Uterus (tissue), 4 donors: ENCODE measurements at regions of chr1 and their contacts with region 1.

Region 1: DNA sequence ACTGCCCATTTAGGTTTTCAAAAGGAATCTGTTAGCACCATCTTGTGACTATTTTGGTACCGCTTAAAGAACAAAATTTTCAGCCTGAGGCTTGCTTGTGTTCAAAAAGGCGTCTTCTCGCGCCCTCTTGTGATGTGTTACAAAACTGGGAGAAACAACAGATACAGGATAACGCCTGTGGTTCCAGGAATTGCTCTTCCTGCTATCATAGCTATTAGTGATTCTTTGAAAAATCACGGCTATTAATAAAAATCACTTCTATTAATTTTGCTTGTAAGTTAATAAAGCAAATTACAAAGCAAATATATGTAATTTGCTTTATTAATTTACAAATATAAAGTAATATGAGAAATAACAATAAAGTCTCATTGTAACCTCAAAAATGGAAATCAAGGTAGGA is 82.2 kb upstream of the ABCD3 start:
- DNase-seq: peak; percentile 66 to 81
- H3K4me3 ChIP-seq: no peak overlapping the region
- H3K27ac ChIP-seq: no peak overlapping the region
- H3K4me1 ChIP-seq: no peaks in the 10 kb centered on the region
- H3K27me3 ChIP-seq: no peaks in the 10 kb centered on the region
- CTCF ChIP-seq: peak; percentile 85 to 99 (median 92)
- POLR2A ChIP-seq: no peak

Region 2: DNA sequence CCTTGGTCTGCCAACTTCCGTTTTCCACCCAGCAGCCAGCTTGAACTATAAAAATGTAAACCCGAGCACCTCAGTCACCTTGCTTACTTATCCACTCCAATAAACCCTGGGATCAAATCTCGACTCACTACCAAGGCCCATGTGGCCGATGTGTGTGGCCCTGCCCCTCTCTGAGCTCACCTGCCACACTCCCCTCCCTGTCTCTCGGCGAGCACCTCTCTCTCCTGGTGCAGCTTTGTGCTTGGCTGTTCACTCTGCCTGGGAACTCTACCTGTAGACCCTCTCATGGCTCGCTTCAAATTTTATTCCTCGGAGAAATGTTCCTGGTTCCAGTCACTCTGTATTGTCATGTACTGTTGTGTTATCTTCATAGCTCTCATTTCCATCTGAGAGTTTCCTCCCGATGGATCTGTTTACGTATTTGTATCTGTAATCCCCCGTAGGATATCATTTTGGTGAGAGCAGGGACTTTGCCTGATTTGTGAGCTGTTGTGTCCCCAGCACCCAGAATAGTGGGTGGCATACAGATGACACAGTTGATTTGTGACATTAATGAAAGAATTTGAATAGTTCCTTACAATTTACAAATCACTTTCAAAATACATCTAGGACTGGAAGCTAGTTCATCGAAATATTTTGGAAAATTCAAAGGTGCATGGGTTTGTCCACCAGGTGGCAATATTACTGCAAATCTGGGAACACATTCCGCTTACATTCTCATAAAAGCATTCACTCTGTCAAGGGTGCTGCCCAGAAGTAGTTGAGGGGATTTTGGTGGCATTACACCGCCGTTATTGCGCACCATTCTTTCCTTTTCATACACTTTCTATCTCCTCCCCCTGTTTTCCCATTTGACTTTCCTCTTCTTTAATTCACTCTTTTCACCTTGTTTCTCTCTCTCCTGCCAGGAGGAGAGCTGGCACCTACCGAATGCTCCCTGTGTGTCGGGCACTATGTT is 310.3 kb before region 1 on chr1:
- intact Hi-C with region 1: loop called (anchors 5 kb)
- DNase-seq: peak in 1 of 2 donors; percentile 52
- H3K4me3 ChIP-seq: no peak overlapping the region
- H3K27ac ChIP-seq: no peak overlapping the region
- H3K4me1 ChIP-seq: no peaks in the 10 kb centered on the region
- H3K27me3 ChIP-seq: no peaks in the 10 kb centered on the region
- CTCF ChIP-seq: peak; percentile 70 to 91 (median 78)
- POLR2A ChIP-seq: no peak

Region 3: DNA sequence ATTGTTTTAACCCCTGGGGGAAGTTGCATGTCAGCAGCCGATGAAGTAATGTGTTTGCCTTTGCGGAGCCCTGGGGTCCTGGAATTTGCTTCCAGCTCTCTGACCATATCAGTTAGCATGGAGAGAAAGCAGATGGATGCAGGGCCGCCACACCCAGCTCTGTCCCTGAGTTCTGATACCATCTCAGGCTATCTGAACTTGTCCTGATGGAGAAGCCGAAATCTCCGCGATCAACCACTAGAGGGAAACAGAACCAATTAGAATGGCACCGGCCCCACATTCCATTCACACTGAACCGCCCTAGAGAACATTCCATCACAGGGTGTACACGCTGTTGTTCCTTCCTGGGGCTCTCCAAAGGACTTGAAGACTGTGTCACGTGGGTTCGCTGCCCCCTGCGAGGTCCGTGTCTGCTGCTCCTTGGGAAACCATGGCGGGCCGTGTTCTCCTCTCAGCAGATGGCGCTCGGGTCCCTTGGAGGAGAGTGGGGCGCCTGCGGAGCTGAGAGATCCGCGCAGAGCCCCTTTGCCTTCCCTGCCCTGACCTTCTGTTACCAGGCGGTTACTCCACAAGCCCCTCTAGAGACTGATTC is 290.4 kb before region 1 on chr1:
- intact Hi-C with region 1: loop called (anchors 5 kb)
- DNase-seq: peak; percentile 80 to 85
- H3K4me3 ChIP-seq: no peak overlapping the region
- H3K27ac ChIP-seq: peak overlapping the region; percentile 58 to 76
- H3K4me1 ChIP-seq: no peaks in the 10 kb centered on the region
- H3K27me3 ChIP-seq: no peaks in the 10 kb centered on the region
- CTCF ChIP-seq: peak; percentile 74 to 84 (median 78)
- POLR2A ChIP-seq: peak in 1 of 2 donors; percentile 16

Region 4: DNA sequence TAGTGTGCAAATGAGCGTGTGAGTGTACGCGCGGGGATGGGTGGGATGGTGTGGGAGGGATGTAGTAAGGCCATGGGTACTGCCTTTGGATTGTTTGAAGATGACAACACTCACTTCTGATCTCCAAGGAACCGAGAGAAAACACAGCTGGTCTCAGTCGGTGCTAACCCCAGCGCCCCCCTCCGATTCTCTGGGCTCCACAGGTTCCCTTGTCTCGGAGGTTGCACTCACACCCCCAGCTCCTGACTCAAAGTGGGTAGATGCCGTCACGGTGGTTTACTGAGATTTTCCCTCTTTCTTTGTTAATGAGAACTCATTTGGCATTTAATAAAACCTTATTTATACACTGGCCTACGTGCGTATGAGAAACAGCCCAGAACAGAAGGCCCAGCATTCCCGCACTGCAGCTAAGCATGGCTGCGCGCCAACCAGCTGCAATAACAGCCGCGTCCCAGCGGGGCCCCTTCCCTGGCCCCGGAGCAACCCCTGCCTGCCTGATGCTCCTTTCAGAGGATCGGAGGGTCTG is 240.8 kb before region 1 on chr1:
- intact Hi-C with region 1: no loop called
- DNase-seq: peak; percentile 83 to 86
- H3K4me3 ChIP-seq: no peak overlapping the region
- H3K27ac ChIP-seq: peak overlapping the region; percentile 78 to 88
- H3K4me1 ChIP-seq: peaks cover 15 to 19% of the 10 kb centered on the region in 2 donors
- H3K27me3 ChIP-seq: no peaks in the 10 kb centered on the region
- CTCF ChIP-seq: no peak
- POLR2A ChIP-seq: no peak

Region 5: DNA sequence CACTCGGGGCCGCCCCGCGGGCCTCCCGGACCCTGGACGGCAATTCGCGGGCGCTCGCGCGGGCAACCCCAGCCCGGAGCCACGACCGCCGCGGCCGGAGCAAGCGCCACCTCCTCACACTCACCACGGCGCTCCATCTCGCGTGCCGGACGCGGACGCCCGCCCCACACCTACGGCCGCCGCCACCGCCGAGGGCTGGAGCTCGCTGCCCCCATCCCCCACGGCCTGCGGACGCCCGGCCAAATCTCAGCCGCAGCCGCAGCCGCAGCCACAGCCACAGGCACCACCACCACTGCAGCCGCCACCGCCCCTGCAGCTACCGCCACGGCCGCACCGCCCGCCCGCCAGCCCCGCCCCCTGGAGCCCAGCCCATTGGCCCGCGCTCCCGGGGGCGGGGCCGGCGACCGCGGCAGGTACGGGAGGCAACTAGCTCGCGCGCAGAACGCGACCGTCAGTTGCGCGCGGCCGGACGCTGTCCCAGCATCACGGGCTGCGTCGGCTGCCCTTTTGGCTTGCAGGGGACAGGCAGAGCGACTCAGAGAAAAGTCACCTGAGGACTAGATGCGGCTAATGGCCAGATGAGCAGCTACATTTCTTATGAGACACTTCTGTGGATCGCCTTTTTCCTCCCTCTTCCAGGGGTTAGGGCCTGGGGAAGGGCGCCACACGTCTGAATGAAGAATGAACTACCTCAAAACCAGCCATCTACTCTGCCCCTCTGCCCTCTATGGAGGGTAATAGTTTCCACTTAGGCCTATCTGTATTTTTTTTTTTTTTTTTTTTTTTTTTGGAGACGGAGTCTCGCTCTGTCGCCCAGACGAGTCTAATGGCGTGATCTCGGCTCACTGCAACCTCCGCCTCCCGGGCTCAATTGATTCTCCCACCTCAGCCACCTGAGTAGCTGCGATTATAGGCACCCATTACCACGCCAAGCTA is 98.4 kb before region 1 on chr1 and contains the start of gene ARHGAP29:
- intact Hi-C with region 1: loop called (anchors 10 kb)
- DNase-seq: peak; percentile 55 to 58
- H3K4me3 ChIP-seq: peak within 1 kb of the TSS; percentile 27 to 56
- H3K27ac ChIP-seq: peak within 1 kb of the TSS; percentile 67 to 72
- H3K4me1 ChIP-seq: no peaks in the 10 kb centered on the region
- H3K27me3 ChIP-seq: peaks cover 3 to 21% of the 10 kb centered on the region in 2 donors
- CTCF ChIP-seq: no peak
- POLR2A ChIP-seq: peak; percentile 76 to 92
- total RNA-seq, gene ARHGAP29: 20.0 to 67.3 (median 38.8) TPM

Region 6: GRCh38 chr1:94411237-94411636 is 75.3 kb after region 1 on chr1:
- intact Hi-C with region 1: no loop called
- DNase-seq: no peak
- H3K4me3 ChIP-seq: no peak overlapping the region
- H3K27ac ChIP-seq: no peak overlapping the region
- H3K4me1 ChIP-seq: no peaks in the 10 kb centered on the region
- H3K27me3 ChIP-seq: no peaks in the 10 kb centered on the region
- CTCF ChIP-seq: no peak
- POLR2A ChIP-seq: no peak